ENCODE measurements at regions of chr4 and their contacts with region 1.

Region 1: DNA sequence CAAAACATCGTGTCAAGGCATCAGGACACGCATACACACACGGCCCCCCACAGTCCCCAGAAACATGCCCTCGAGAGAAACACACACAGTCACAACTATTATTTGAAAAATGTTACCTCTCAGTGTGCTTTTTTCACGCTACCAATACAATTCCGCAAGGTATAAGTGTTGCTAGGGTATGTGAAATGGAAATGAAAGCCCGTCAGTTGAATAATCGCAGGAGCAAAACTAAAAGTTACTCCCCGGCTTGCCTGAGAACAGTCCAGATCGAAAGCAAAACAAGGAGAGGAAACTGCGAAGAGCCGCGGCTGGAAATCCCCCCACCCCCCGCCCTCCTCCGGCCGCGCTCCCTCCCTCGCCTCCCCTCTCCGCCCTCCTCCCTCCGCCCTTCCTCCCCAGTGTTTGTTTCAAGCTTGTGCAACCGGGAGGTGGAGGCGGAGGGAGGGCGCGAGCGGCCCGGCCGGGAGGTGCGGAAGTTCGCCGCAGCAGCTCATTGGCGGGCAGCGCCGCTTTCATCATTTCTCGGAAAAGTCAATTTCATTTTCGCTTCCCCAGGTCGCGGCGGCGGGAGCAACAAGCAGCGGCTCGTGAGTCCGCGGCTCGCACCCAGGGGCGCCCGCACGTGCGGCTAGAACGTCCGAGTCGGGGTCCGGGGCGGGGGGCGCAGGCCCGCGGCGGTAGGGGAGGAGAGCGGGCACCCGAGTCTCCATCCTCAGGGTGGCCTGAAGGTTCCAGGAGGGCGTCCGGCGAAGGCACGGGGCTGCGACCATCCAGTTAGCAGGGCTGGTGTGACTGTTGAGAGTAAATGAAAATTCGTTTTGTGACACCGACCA is at the start of gene IRF2:
- DNase-seq: peak; percentile 97 to 98
- ATAC-seq: peak; percentile 86 to 90 (median 88)
- H3K4me3 ChIP-seq: peak within 1 kb of the TSS; percentile 84
- H3K27ac ChIP-seq: peak within 1 kb of the TSS; percentile 97
- H3K4me1 ChIP-seq: peaks cover 52% of the 10 kb centered on the region
- H3K27me3 ChIP-seq: no peaks in the 10 kb centered on the region
- CTCF ChIP-seq: no peak
- total RNA-seq, gene IRF2: 14.6 to 23.4 (median 16.3) TPM

Region 2: DNA sequence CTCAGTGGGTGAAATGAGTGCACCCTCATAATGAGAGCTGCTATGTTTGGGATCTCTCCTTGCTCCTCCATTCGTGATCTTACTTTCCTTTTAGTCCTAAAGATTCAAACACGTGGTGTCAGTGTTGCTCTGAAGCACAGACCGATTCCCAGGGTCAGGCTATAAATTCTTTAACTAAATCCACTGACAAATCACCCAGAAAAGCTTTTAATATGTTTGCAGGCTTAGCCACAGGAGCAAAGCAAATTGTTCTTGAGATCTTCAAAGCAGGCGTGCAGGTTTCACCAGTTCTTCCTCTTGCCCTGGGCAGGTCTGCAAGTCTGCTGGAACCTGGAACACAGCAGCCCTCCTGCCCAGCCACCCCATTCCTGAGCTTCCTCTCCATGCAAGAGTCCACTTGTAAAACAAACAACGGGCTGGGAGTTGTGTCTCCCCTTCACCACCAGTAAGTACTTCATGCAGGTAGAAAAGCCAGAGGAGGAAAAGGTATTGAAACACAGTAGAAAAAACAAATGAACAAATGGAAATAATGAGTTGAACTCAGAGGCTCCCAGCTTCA is 186.7 kb before region 1 on chr4:
- intact Hi-C with region 1: loop called in 1 of 2 experiments (anchors 5 kb)
- DNase-seq: no peak
- ATAC-seq: peak; percentile 37 to 93 (median 82)
- H3K4me3 ChIP-seq: no peak overlapping the region
- H3K27ac ChIP-seq: peak overlapping the region; percentile 50
- H3K4me1 ChIP-seq: peaks cover 11% of the 10 kb centered on the region
- H3K27me3 ChIP-seq: no peaks in the 10 kb centered on the region
- CTCF ChIP-seq: peak; percentile 55

Region 3: DNA sequence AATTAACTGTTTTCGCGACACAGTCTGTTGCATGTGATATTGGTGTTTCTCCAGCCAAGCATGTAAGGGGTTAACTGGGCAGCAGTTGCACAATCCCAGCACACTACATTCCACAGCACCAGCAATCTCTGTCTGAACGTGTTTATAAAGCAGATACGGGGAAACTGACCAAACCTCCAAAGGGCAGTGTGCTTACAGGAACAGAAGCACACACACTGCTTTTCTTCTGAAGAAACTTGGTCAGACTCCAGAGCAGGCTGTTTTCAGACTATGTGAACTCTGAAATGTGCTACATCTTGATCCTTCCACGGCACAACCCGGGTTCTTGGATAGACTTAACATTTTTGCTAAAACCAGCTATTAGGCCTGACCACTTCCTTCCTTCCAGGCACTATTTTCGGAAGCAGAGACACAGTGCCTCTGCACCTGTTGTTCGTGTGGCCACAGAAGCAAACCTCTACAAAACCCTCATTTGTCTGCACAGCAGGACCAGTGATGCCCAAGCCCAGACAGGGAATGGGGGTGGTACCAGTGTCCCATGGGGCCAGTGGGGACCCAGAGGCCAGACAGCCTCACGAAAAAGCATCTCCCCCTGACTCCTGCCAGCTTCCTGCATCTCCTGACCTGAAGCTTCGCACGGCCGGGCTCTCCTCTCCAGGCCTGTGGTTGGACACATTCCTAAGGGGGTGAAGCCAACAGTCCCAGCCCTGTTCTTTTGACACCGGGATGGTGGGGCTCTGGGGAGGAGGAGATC is 90.2 kb before region 1 on chr4:
- intact Hi-C with region 1: loop called (anchors 1 to 5 kb)
- DNase-seq: no peak
- ATAC-seq: peak; percentile 48 to 60 (median 58)
- H3K4me3 ChIP-seq: peak overlapping the region; percentile 42
- H3K27ac ChIP-seq: peak overlapping the region; percentile 82
- H3K4me1 ChIP-seq: peaks cover 62% of the 10 kb centered on the region
- H3K27me3 ChIP-seq: no peaks in the 10 kb centered on the region
- CTCF ChIP-seq: no peak

Region 4: DNA sequence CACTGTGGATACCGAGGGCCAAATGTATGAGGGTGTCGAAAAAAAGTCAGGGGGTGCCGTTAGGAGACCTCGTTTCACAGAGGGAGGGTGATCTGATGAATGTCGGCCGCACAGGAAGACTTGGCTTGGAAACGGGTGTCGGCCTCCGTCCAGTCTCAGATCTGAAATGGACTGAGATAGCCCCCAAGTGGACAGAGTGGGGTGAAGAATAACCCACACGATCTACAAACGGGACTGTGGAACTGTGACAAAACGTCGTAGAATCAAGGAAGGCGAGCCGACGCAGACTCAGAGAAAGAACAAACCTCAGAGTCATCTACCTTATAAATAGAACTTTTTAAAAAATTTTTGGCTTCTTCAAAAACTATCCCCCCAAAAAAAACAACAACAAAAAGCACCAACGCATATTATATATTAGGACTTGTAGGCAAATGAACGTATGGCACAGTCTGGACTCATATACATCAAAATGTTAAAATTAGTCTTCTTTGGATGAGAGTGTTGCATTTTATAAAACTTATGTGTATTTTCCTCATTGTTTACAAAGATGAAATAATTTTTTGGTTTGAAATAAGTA is 63.6 kb after region 1 on chr4:
- intact Hi-C with region 1: loop called (anchors 1 to 2 kb)
- DNase-seq: peak; percentile 88 to 94
- ATAC-seq: peak; percentile 92 to 95 (median 94)
- H3K4me3 ChIP-seq: peak overlapping the region; percentile 89
- H3K27ac ChIP-seq: peak overlapping the region; percentile 98
- H3K4me1 ChIP-seq: peaks cover 19% of the 10 kb centered on the region
- H3K27me3 ChIP-seq: no peaks in the 10 kb centered on the region
- CTCF ChIP-seq: peak; percentile 67

Region 5: GRCh38 chr4:184825896-184826690 is 351.6 kb after region 1 on chr4 and contains the start of gene ACSL1:
- intact Hi-C with region 1: loop called in 1 of 2 experiments (anchors 10 kb)
- DNase-seq: peak; percentile 91 to 95
- ATAC-seq: peak; percentile 81 to 89 (median 87)
- H3K4me3 ChIP-seq: peak within 1 kb of the TSS; percentile 82
- H3K27ac ChIP-seq: peak within 1 kb of the TSS; percentile 92
- H3K4me1 ChIP-seq: peaks cover 32% of the 10 kb centered on the region
- H3K27me3 ChIP-seq: no peaks in the 10 kb centered on the region
- CTCF ChIP-seq: peak; percentile 7
- total RNA-seq, gene ACSL1: 257 to 1,392 (median 704) TPM

Measured in psoas muscle (tissue), 8 donors.